Mammary epithelial cell (primary cell): ENCODE measurements at regions of chr10 and their contacts with region 1.

Region 1: DNA sequence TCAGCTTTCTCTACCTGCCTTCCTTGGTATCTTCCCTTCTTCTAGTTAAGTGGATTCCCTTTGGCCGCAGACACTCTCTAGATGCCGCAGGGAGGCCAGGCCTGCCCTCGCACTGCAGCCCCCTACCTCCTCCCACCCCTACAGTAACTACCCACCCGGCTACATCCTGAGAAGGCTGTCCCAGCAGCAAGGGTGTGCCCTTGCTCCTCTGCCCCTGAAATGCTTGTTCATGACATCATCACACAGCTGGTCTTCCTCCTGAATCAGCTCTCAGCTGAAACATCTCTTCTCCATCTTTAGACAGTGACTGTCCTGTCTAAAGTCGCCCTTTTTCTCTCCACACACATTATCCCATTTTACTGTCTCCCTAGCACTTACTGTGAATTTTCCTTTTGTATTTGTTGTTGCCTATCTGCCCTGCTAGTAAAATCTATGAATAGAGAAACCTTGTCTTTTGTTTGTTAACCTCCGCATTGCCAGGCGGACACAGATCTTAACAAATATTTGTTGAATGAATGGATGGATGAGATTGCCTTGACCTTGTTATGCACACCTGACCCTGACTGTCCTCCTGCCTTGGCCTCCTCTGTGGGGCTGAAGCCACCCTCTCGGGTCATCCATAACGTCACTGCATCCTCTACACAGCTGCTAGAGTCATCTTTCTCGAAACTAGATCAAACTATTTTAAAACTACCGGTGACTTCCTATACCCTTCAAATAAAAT is 108.9 kb upstream of the GATA3 start:
- DNase-seq: peak; percentile 39
- H3K4me3 ChIP-seq: no peak overlapping the region
- H3K27ac ChIP-seq: peak overlapping the region; percentile 16
- H3K4me1 ChIP-seq: peaks cover 27% of the 10 kb centered on the region
- H3K27me3 ChIP-seq: no peaks in the 10 kb centered on the region
- CTCF ChIP-seq: no peak

Region 2: GRCh38 chr10:7891634-7892033 is 54.0 kb before region 1 on chr10:
- CTCF ChIA-PET with region 1: no interaction called
- dilution Hi-C with region 1: no loop called
- in situ Hi-C with region 1: no loop called
- intact Hi-C with region 1: no loop called
- DNase-seq: no peak
- H3K4me3 ChIP-seq: no peak overlapping the region
- H3K27ac ChIP-seq: no peak overlapping the region
- H3K4me1 ChIP-seq: no peaks in the 10 kb centered on the region
- H3K27me3 ChIP-seq: no peaks in the 10 kb centered on the region
- CTCF ChIP-seq: no peak

Region 3: GRCh38 chr10:8035006-8035640 is 89.5 kb after region 1 on chr10:
- CTCF ChIA-PET with region 1: no interaction called
- dilution Hi-C with region 1: loop called (anchors 10 kb)
- in situ Hi-C with region 1: no loop called
- intact Hi-C with region 1: no loop called
- DNase-seq: no peak
- H3K4me3 ChIP-seq: no peak overlapping the region
- H3K27ac ChIP-seq: no peak overlapping the region
- H3K4me1 ChIP-seq: peaks cover 2% of the 10 kb centered on the region
- H3K27me3 ChIP-seq: peaks cover 42% of the 10 kb centered on the region
- CTCF ChIP-seq: no peak